ENCODE measurements at regions of chr6 and their contacts with region 1.

Region 1: DNA sequence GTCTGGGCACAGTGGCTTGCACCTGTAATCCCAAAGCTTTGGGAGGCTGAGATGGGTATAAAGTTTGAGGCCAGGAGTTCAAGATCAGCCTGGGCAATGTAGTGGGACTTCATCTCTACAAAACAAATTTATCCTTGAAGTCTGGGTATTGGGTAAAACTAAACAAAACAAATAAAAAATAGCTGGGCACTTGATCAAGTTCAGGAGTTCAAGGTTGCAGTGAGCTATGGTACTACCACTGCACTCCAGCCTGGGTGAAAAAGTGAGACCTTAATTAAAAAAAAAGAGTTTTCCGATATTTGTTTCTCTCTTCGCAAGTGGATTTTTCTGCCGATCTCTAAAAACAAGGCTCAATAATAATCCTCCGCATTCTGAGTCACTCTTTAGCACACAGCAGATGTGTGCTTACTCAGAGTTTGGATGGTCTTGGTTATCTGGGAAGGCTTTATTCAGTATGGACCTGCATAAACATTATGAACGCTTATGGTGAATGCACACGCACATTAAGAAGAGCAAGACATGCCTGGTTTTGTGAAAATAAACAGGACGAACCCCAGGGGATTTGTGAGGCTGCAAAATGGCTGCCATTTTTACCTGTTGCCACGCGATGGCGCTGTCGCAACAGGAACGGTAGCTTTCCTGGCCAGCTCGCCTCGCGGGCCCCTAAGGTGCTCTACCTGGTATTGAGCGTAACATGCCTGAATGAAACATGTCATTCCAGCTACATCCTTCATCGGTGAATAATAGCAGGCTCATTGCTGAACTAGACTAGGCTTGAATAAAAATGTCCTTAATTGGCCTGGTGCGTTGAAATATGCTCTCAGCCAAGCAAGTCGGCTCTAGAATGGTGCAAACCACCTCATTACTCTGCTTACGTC is 6.0 kb downstream of the OPN5 start:
- DNase-seq: peak; percentile 27 to 70 (median 39)
- ATAC-seq: peak; percentile 26 to 69 (median 54)
- H3K4me3 ChIP-seq: peak overlapping the region in 3 of 12 donors; percentile 4 to 19 (median 12)
- H3K27ac ChIP-seq: no peak overlapping the region
- H3K4me1 ChIP-seq: peaks cover 0 to 9% (median 1%) of the 10 kb centered on the region in 12 donors
- H3K27me3 ChIP-seq: peaks cover 0 to 18% (median 0%) of the 10 kb centered on the region in 9 donors
- CTCF ChIP-seq: peak; percentile 79 to 97 (median 92)
- POLR2A ChIP-seq: no peak

Region 2: GRCh38 chr6:47769982-47770381 is 17.9 kb before region 1 on chr6:
- intact Hi-C with region 1: no loop called
- DNase-seq: no peak
- ATAC-seq: no peak
- H3K4me3 ChIP-seq: no peak overlapping the region
- H3K27ac ChIP-seq: no peak overlapping the region
- H3K4me1 ChIP-seq: no peaks in the 10 kb centered on the region
- H3K27me3 ChIP-seq: no peaks in the 10 kb centered on the region
- CTCF ChIP-seq: no peak
- POLR2A ChIP-seq: no peak

Region 3: DNA sequence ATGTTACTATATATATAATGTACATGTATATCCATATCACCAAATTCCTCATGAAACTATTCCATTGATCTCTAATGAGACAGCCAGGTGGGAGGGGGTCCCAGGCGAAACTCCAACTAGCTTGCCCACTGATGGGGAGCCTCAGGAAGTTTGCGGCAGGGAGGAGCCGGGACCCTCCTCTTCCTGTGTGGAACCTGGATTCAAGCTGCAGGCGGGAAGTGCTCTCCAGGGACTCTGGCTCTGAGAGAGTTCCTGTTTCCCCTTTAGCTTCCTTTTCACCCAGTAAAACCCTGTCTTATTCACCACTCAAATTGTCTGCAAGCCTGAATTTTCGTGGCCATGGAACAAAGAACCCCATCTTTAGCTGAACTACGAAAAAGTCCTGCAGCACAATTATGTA is 146.2 kb after region 1 on chr6:
- intact Hi-C with region 1: loop called in 1 of 10 experiments (anchors 10 kb)
- DNase-seq: peak in 4 of 5 donors; percentile 18 to 43 (median 32)
- ATAC-seq: peak in 1 of 4 donors; percentile 82
- H3K4me3 ChIP-seq: no peak overlapping the region
- H3K27ac ChIP-seq: peak overlapping the region in 3 of 12 donors; percentile 2 to 26 (median 17)
- H3K4me1 ChIP-seq: peaks cover 0 to 27% (median 0%) of the 10 kb centered on the region in 12 donors
- H3K27me3 ChIP-seq: no peaks in the 10 kb centered on the region
- CTCF ChIP-seq: no peak
- POLR2A ChIP-seq: no peak

Region 4: GRCh38 chr6:48476257-48476656 is 688.4 kb after region 1 on chr6:
- intact Hi-C with region 1: loop called in 1 of 10 experiments (anchors 10 kb)
- DNase-seq: no peak
- ATAC-seq: no peak
- H3K4me3 ChIP-seq: no peak overlapping the region
- H3K27ac ChIP-seq: no peak overlapping the region
- H3K4me1 ChIP-seq: no peaks in the 10 kb centered on the region
- H3K27me3 ChIP-seq: peaks cover 0 to 6% (median 0%) of the 10 kb centered on the region in 9 donors
- CTCF ChIP-seq: peak in 3 of 12 donors; percentile 9 to 14 (median 10)
- POLR2A ChIP-seq: no peak

Region 5: GRCh38 chr6:49409951-49410542 is 1622.2 kb after region 1 on chr6:
- intact Hi-C with region 1: loop called in 9 of 10 experiments (anchors 2 to 10 kb)
- DNase-seq: peak in 4 of 5 donors; percentile 26 to 54 (median 45)
- ATAC-seq: peak in 3 of 4 donors; percentile 54 to 74 (median 65)
- H3K4me3 ChIP-seq: no peak overlapping the region
- H3K27ac ChIP-seq: no peak overlapping the region
- H3K4me1 ChIP-seq: no peaks in the 10 kb centered on the region
- H3K27me3 ChIP-seq: no peaks in the 10 kb centered on the region
- CTCF ChIP-seq: peak; percentile 76 to 91 (median 82)
- POLR2A ChIP-seq: no peak